Upper lobe of right lung (tissue), 1 donor: ENCODE measurements at regions of chr3 and their contacts with region 1.

Region 1: GRCh38 chr3:157618075-157618760 is 115.0 kb upstream of the VEPH1 start:
- DNase-seq: no peak
- ATAC-seq: peak; percentile 63
- H3K4me3 ChIP-seq: no peak overlapping the region
- H3K27ac ChIP-seq: no peak overlapping the region
- H3K4me1 ChIP-seq: no peaks in the 10 kb centered on the region
- H3K27me3 ChIP-seq: no peaks in the 10 kb centered on the region
- CTCF ChIP-seq: peak; percentile 67

Region 2: DNA sequence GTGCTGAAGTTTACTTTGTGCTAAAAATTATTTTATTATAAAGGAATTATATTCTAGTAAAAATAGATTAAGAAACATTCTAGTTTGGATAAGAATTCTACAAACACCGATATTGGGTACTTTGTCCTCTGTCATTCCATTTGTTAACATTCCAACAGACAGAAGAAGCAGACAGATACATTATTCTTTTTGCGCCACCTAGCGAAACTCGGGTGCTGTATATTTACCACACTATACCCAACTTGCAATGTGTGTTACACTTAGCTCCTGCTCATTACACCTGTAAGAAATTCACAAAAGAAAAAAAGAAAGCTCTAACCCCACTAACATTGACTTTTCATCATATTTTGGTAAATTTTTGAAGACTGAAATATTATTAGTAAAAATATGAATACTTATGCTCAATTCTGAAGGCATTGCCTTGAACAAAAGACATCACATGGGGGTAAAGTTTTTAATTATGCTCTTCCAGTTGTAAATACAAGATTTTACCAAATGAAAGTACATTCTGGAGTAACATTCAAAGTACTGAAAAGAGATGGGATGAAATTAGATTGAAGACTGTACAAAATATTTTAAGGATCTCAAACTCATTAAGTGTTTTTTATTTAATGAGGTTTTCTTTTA is 816.3 kb after region 1 on chr3:
- intact Hi-C with region 1: loop called (anchors 10 kb)
- DNase-seq: no peak
- ATAC-seq: peak; percentile 85
- H3K4me3 ChIP-seq: no peak overlapping the region
- H3K27ac ChIP-seq: no peak overlapping the region
- H3K4me1 ChIP-seq: no peaks in the 10 kb centered on the region
- H3K27me3 ChIP-seq: no peaks in the 10 kb centered on the region
- CTCF ChIP-seq: peak; percentile 70